T-cell (primary cell): ENCODE measurements at regions of chr10 and their contacts with region 1.

Region 1: GRCh38 chr10:7417103-7417623 is 6.3 kb upstream of the SFMBT2 start:
- DNase-seq: peak in 2 of 35 experiments; percentile 8 to 76
- ATAC-seq: peak in 3 of 4 experiments; percentile 47 to 71 (median 47)
- H3K4me3 ChIP-seq: no peak overlapping the region
- H3K4me3 Mint-ChIP-seq: no peak overlapping the region
- H3K27ac ChIP-seq: no peak overlapping the region
- H3K27ac Mint-ChIP-seq: peak overlapping the region in 1 of 2 donors; percentile 56
- H3K4me1 ChIP-seq: peaks cover 6 to 8% of the 10 kb centered on the region in 2 experiments
- H3K4me1 Mint-ChIP-seq: peaks cover 21 to 28% (median 22%) of the 10 kb centered on the region in 3 donors
- H3K27me3 ChIP-seq: peaks cover 0 to 7% of the 10 kb centered on the region in 2 experiments
- H3K27me3 Mint-ChIP-seq: peaks cover 0 to 3% of the 10 kb centered on the region in 2 donors

Region 2: GRCh38 chr10:6920072-6921019 is 496.8 kb before region 1 on chr10:
- CTCF ChIA-PET with region 1: interaction called, 24 to 26 read pairs
- POLR2A ChIA-PET with region 1: no interaction called
- DNase-seq: peak; percentile 47 to 86 (median 71)
- ATAC-seq: peak; percentile 96 to 100 (median 100)
- H3K4me3 ChIP-seq: no peak overlapping the region
- H3K4me3 Mint-ChIP-seq: no peak overlapping the region
- H3K27ac ChIP-seq: no peak overlapping the region
- H3K27ac Mint-ChIP-seq: no peak overlapping the region
- H3K4me1 ChIP-seq: peaks cover 0 to 7% of the 10 kb centered on the region in 2 experiments
- H3K4me1 Mint-ChIP-seq: peaks cover 10 to 23% (median 18%) of the 10 kb centered on the region in 3 donors
- H3K27me3 ChIP-seq: no peaks in the 10 kb centered on the region
- H3K27me3 Mint-ChIP-seq: peaks cover 0 to 11% of the 10 kb centered on the region in 2 donors

Region 3: GRCh38 chr10:6987536-6987945 is 429.6 kb before region 1 on chr10:
- CTCF ChIA-PET with region 1: no interaction called
- POLR2A ChIA-PET with region 1: interaction called in 1 of 2 experiments, 13 read pairs
- DNase-seq: no peak
- ATAC-seq: no peak
- H3K4me3 ChIP-seq: no peak overlapping the region
- H3K4me3 Mint-ChIP-seq: no peak overlapping the region
- H3K27ac ChIP-seq: no peak overlapping the region
- H3K27ac Mint-ChIP-seq: no peak overlapping the region
- H3K4me1 ChIP-seq: peaks cover 0 to 11% of the 10 kb centered on the region in 2 experiments
- H3K4me1 Mint-ChIP-seq: peaks cover 5 to 11% (median 8%) of the 10 kb centered on the region in 3 donors
- H3K27me3 ChIP-seq: no peaks in the 10 kb centered on the region
- H3K27me3 Mint-ChIP-seq: peaks cover 0 to 2% of the 10 kb centered on the region in 2 donors

Region 4: DNA sequence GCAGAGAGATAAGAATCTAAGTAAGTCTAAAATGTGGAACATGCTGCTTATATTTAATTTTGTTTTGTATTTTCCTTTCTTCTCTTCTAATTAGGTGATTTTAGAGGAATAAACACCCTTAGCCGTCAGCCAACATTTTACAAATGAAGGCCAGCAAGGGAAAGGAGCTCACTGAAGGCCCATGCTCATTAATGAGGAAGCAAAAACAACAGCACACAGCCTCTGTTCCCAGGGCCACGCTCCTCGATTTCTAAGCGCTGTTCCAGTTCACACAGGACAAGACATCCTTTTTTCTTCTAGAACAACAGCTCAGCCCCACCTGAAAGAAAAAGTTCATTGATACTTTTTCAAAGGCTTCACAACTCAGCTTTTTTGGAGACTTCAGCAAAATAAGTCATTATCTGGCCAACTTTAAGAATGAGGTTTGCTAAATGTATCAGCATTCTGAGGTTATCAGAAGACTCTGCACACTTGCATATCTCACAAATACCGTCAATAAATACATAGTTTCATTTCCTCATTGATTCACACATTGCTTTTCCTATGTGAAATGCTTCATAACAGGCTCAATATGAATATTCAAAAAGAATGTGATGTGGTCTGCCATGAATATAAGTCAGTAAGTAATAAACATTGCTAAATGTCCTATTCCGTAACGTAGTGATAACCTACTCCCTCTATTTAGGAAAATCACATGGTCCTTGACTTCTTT is 28.5 kb after region 1 on chr10:
- CTCF ChIA-PET with region 1: no interaction called
- POLR2A ChIA-PET with region 1: no interaction called
- DNase-seq: no peak
- ATAC-seq: no peak
- H3K4me3 ChIP-seq: no peak overlapping the region
- H3K4me3 Mint-ChIP-seq: no peak overlapping the region
- H3K27ac ChIP-seq: no peak overlapping the region
- H3K27ac Mint-ChIP-seq: no peak overlapping the region
- H3K4me1 ChIP-seq: no peaks in the 10 kb centered on the region
- H3K4me1 Mint-ChIP-seq: peaks cover 4 to 16% (median 7%) of the 10 kb centered on the region in 3 donors
- H3K27me3 ChIP-seq: no peaks in the 10 kb centered on the region
- H3K27me3 Mint-ChIP-seq: no peaks in the 10 kb centered on the region